ENCODE measurements at regions of chr9 and their contacts with region 1.

Region 1: DNA sequence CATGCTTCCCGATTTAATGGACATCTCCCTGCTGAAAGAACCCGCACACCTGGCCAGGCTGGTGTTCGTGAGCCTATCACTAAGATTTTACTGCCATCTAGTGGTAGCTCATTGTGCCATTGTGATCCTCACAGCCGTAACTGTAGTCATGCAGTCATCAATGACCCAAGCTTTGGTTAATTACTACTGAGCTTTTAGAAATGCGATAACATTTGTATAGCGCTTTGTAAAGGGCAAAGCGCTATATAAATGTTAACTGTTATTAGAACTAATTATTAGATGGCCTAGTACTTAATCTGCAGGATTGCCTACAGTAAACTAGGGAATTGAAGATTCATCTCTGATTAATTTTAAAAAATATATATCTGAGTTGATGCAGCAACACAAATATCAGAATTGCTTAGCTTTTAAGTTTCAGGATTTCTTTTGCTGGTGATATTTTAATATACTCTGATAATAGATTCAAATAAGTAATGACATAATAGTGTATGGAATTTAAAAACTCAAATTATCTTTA is 90.2 kb downstream of the HACD4 start:
- DNase-seq: peak; percentile 84
- H3K4me3 ChIP-seq: no peak overlapping the region
- H3K27ac ChIP-seq: no peak overlapping the region
- H3K4me1 ChIP-seq: no peaks in the 10 kb centered on the region
- H3K27me3 ChIP-seq: no peaks in the 10 kb centered on the region

Region 2: DNA sequence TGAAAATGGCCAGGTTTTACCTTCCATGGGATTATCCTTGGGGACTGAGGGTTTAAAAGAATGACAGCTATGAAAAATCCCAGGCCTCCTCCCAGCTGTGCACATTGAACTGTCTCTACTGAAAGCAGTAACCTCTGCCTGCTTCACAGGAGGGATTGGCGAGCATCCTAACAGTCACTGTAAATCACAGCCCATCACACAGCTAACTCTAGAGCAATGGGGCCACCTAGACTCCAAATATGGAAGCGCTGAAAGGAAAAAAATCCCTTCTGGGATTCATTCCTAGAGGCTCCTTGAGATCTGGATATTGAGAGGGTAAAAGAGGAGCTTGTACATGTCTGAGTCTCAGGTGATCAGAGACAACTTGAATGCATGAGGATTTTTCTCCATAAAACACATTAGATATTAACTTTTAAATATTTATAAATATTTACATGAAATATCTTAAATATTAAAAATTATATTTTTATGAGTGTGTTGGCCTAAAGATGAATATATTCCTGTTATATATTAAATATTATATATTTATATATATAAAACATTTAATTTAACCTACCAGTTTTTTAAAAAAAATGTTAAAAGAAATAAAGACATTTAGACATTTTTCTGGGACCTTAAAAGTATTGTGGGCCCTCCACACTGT is 1018.6 kb before region 1 on chr9:
- in situ Hi-C with region 1: loop called (anchors 25 kb)
- DNase-seq: peak; percentile 72
- H3K4me3 ChIP-seq: no peak overlapping the region
- H3K27ac ChIP-seq: no peak overlapping the region
- H3K4me1 ChIP-seq: 0 out of 2 replicates have a peak, but pooled peaks cover 3% of the 10 kb centered on the region
- H3K27me3 ChIP-seq: no peaks in the 10 kb centered on the region

Region 3: DNA sequence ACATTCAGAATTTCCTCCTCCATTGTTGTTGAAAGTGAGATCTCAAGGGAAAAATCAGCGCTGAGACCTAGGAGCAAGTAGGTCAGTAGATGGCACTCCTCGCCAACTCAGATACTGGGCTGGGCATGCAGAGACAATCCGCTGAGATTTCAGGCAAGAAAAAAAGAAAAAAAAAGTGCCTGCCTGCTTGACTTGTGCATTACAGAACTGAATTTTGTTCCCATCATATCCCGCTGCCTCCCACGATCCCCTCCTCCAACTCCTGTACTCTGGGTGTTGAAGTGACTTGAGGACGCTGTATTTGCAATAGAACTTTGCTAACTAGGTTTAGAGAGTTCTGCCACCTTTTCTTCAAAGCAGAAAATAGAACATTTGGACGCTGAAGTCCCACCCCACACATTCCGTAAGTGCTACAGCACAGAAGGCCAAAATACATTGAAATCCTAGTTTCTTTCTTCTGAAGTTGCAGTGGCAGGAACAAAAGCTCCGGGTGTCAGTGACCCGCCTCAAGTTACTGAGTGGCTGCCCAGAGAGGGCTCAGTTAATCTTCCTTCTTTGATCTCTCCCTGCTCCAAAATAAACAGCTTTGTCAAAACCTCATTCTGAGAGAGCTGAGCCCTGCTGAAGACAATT is 584.7 kb before region 1 on chr9:
- in situ Hi-C with region 1: loop called (anchors 25 kb)
- DNase-seq: peak; percentile 89
- H3K4me3 ChIP-seq: peak overlapping the region; percentile 47
- H3K27ac ChIP-seq: peak overlapping the region; percentile 64
- H3K4me1 ChIP-seq: peaks cover 38% of the 10 kb centered on the region
- H3K27me3 ChIP-seq: no peaks in the 10 kb centered on the region

Region 4: DNA sequence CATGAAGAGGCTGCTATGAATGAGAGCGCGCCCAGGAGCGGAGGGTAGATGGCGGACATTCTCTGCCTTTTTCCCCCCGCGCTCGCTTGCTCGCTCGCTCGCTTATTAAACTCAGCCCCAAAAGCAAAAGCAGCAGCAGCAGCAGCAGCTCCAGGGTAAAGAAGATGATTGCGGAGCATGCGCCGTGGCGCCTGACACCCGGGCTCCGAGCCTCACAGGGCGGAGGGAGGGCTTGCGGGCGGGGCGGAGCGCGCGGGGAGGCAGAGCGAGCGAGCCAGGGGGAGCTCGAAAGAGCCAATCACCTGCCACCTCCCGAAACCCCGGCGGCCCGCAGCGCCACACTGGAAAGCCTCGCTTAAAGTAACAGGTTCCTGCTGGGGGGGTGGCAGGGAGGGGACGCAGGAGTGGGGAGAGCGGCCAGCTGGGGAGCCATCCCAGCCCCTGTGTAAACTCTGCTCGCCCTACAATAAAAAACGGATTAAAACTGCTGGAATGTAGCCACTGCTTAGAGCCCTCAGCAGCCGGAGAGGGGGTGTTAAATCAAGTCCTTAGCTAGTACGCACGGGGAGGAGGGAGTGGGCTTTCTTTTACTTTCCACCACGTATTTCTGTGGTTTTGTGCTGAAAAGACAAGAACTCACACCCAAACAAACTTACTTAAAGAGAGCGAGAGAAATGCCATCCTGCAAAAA is 318.8 kb before region 1 on chr9 and contains the start of gene MLLT3:
- in situ Hi-C with region 1: loop called (anchors 10 kb)
- DNase-seq: peak; percentile 98
- H3K4me3 ChIP-seq: peak within 1 kb of the TSS; percentile 91
- H3K27ac ChIP-seq: peak within 1 kb of the TSS; percentile 79
- H3K4me1 ChIP-seq: peaks cover 15% of the 10 kb centered on the region
- H3K27me3 ChIP-seq: no peaks in the 10 kb centered on the region
- total RNA-seq, gene MLLT3: 11.9 and 12.1 TPM in 2 replicates